ENCODE measurements at regions of chr12 and their contacts with region 1.

Region 1: GRCh38 chr12:53500776-53501614 is at the start of gene TARBP2:
- DNase-seq: peak; percentile 95 to 99 (median 99)
- H3K4me3 ChIP-seq: peak within 1 kb of the TSS; percentile 52 to 100 (median 80)
- H3K27ac ChIP-seq: peak within 1 kb of the TSS; percentile 94 to 100 (median 99)
- H3K27me3 ChIP-seq: no peaks in the 10 kb centered on the region
- CTCF ChIP-seq: peak in 40 of 56 donors; percentile 2 to 60 (median 28)
- total RNA-seq, gene TARBP2: 10.9 to 29.5 (median 20.9) TPM

Region 2: DNA sequence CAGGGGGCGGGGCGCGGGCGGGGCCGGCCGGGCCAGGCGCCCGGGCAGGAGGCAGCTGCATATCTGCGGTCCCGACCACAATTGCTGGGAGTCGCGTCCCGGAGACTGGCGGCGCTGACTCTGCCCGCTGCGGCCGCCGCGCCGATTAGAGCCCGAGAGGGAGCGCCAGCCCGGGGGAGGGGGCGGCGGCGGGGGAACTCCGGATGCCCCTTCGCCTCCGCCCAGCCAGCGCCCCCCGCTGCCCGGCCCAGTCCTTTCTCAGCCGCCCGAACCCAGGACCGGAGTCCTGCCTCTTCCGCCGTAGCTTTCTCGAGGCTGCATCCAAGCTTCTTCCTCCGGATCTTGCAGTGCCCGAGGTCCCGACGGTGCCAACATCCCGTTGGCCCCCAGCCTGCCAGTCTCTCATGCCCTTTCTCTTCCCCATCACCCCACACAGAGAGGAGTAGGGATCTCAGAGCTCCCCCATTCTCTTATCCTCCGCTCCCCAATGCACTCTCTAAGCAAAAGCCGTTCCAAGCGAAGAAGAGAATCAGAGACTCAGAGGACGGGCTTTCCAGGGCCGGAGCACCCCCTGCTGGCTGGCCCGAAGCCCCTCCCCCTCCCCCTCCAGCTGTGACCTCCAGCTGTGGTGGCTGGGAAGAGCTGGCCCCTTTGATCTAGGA is 156.0 kb before region 1 on chr12:
- intact Hi-C with region 1: loop called in 1 of 2 experiments (anchors 10 kb)
- DNase-seq: peak; percentile 42 to 86 (median 80)
- H3K4me3 ChIP-seq: peak overlapping the region; percentile 50 to 90 (median 80)
- H3K27ac ChIP-seq: peak overlapping the region; percentile 82 to 100 (median 98)
- H3K27me3 ChIP-seq: no peaks in the 10 kb centered on the region
- CTCF ChIP-seq: peak in 55 of 56 donors; percentile 45 to 96 (median 82)

Region 3: GRCh38 chr12:53379389-53380103 is 121.4 kb before region 1 on chr12:
- intact Hi-C with region 1: loop called in 1 of 2 experiments (anchors 5 kb)
- DNase-seq: peak; percentile 95 to 100 (median 100)
- H3K4me3 ChIP-seq: peak overlapping the region; percentile 49 to 97 (median 76)
- H3K27ac ChIP-seq: peak overlapping the region; percentile 86 to 100 (median 98)
- H3K27me3 ChIP-seq: no peaks in the 10 kb centered on the region
- CTCF ChIP-seq: peak in 11 of 56 donors; percentile 5 to 34 (median 14)

Region 4: DNA sequence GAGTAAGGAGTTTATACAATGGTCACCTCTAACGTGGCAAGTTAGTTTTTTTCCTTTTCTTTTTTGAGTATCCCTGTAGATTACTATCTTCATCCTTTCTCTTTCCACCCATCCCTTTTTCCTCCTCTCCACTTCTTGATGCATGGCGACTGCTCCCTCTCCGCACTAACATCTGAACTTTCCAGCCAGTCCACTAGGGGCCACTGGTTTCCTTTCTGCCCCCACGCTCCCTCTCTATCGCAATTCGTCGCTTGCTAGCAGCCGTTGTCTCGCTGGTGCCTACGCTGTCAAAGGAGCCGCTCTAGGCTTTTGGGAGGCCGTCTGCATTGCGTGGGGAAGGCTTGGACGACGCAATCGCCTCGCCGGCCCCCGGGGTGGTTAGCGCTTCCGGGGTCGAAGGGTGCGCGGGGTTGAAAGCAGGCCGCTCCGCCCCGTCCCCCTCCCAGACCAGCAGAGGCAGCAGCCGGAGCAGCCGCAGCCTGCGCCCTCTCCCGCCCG is 49.3 kb before region 1 on chr12 and contains the start of gene PCBP2:
- intact Hi-C with region 1: loop called (anchors 1 to 2 kb)
- DNase-seq: peak; percentile 97 to 100 (median 99)
- H3K4me3 ChIP-seq: peak within 1 kb of the TSS; percentile 59 to 94 (median 77)
- H3K27ac ChIP-seq: peak within 1 kb of the TSS; percentile 74 to 99 (median 96)
- H3K27me3 ChIP-seq: no peaks in the 10 kb centered on the region
- CTCF ChIP-seq: peak; percentile 80 to 98 (median 94)
- total RNA-seq, gene PCBP2: 394 to 594 (median 494) TPM